Activated CD8-positive, alpha-beta memory T cell treated with anti-CD3 and anti-CD28 coated beads, Interleukin-2, amount 10 ng/mL, durations not matched to agents 7 days and 5 days (primary cell): ENCODE measurements at regions of chr12 and their contacts with region 1.

Region 1: DNA sequence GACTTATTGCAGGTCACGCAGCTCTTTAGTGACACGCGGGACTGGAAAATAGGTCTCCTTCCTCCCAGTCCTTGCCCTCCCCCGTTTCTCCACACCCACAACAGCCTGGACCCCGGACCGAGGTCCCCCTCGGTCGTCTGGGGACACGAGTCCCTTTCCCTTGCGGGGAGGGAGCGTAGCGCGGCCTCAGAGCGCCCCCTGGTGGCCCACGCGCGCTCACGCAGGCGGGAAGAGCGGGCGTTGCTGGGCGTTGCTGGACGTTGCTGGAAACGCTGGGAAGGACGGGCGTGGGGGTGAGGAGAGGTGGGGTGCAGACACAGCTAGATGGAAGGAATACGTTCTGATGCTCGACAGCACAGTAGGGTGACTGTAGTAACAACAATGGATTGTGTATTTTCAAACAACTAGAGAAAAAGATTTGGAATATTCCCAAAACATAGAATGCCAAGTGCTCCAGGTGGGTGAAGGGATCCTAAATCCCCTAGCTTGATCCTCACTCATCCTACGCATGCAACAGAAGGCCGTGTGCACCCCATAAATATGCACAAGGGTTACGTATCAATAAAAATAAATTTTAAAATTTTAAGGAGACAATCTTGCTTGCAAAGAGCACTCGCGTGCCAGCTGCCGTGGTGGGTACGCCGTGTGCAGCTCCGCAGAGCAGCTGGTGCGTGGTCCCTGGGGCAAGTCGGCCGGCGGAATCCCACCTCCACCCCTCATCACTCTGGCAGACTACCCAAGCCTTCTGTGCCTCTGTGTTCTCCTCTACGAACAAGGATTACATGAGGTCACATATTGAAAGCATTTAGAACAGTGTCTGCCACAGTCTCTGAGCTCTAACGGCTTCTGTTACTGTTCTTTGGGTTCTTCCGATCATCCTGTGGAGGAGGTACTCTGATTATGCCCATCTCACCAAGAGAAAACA is 87.4 kb downstream of the B4GALNT3 start:
- DNase-seq: peak; percentile 79
- ATAC-seq: peak; percentile 84
- H3K4me3 Mint-ChIP-seq: no peak overlapping the region
- H3K27ac Mint-ChIP-seq: no peak overlapping the region
- H3K4me1 Mint-ChIP-seq: peaks cover 14% of the 10 kb centered on the region
- H3K27me3 Mint-ChIP-seq: peaks cover 14% of the 10 kb centered on the region

Region 2: DNA sequence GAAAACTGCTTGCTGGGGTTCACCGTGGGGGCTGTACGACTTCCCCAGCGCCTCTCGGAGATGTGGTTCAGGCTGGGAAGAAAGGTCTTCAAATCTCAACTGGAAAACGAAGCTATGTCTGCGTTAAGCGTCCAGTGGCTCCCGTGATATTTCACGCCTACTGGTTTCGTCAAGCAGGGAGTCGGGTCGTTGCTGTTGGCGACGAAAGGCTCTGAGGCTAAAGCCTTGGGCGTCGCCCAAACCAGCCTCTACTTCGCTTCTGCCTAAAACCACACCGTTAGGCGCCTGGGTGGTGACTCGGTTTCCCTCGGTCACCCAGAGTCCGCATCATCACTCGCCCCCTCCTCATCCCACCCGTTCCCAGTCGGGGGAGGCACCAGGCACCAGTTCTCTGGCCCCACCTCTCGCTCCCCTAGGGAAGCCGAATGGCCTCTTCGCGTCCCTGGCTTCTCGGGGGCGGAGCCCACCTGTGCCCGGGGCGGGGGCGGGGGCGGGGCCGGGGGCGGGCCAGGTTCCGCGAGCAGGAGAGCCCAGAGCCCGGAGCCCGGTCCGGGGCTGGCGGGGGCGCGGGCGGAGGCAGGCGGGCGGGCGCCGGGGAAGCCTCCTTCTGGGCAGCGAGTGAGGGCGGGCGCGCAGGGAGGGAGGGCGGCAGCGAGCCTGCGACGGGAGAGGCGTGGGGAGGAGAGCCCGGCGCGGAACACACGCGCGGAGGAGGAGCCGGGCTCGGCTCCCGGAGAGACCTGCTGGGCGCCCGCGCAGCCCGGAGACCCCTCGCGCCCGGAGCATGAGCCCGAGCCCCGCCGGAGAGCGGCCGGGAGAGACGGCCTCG is 87.5 kb before region 1 on chr12 and contains the start of gene B4GALNT3:
- CTCF ChIA-PET with region 1: interaction called, 99 read pairs
- DNase-seq: no peak
- ATAC-seq: peak; percentile 71
- H3K4me3 Mint-ChIP-seq: peak within 1 kb of the TSS; percentile 68
- H3K27ac Mint-ChIP-seq: no peak within 1 kb of the TSS
- H3K4me1 Mint-ChIP-seq: peaks cover 16% of the 10 kb centered on the region
- H3K27me3 Mint-ChIP-seq: peaks cover 72% of the 10 kb centered on the region
- total RNA-seq, gene B4GALNT3: 0.37 to 0.64 TPM

Region 3: DNA sequence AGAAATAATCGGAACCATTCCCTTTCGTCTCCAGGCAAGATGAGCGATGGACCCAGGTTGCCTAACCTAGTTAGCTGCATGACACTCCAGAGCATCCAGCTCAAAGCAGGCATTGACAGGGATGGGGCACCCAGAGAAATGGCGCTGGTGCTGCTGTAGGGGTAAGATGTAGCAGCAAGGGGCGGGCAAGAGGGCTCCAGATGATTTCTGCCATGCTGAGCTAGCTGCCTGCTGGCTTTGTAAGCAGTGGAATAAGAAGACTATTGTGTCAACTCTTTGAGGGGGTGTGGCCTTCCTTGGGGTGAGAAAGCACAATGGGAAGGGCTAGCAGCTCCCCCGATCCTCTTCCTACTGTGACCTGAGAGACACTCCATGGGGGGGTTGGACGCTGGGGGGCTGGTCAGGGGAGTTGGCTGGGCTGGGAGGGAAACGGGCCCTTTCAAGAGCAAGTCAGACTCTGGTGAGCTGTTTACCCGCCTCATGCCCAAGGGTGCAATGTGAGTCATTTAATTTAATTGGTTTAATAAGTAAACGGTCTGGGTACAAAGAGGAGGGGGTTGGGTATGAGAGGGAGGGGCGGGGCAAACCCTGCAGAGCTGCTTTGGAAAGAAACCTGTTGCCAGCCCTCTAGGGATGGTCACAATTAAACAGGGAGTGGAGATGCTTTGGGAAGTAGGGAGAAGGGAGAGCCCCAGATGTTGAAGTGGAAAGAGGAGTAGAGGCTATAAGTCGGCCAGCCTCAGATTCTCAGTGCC is 36.9 kb before region 1 on chr12:
- CTCF ChIA-PET with region 1: no interaction called
- DNase-seq: no peak
- ATAC-seq: no peak
- H3K4me3 Mint-ChIP-seq: no peak overlapping the region
- H3K27ac Mint-ChIP-seq: no peak overlapping the region
- H3K4me1 Mint-ChIP-seq: peaks cover 3% of the 10 kb centered on the region
- H3K27me3 Mint-ChIP-seq: peaks cover 14% of the 10 kb centered on the region

Region 4: GRCh38 chr12:563250-563781 is 16.1 kb after region 1 on chr12:
- CTCF ChIA-PET with region 1: interaction called, 10 read pairs
- DNase-seq: peak; percentile 83
- ATAC-seq: peak; percentile 88
- H3K4me3 Mint-ChIP-seq: peak overlapping the region; percentile 68
- H3K27ac Mint-ChIP-seq: peak overlapping the region; percentile 91
- H3K4me1 Mint-ChIP-seq: peaks cover 42% of the 10 kb centered on the region
- H3K27me3 Mint-ChIP-seq: peaks cover 2% of the 10 kb centered on the region